PC-9 (cell line): ENCODE measurements at regions of chr14 and their contacts with region 1.

Region 1: GRCh38 chr14:75554487-75554886 is 23.9 kb upstream of the FLVCR2 start:
- DNase-seq: peak; percentile 81 to 100
- H3K4me3 ChIP-seq: peak overlapping the region; percentile 12; the same call in 1 of the 2 replicates
- H3K27ac ChIP-seq: peak overlapping the region; percentile 70
- H3K4me1 ChIP-seq: peaks cover 52% of the 10 kb centered on the region
- H3K27me3 ChIP-seq: no peaks in the 10 kb centered on the region
- CTCF ChIP-seq: no peak

Region 2: GRCh38 chr14:75487155-75487671 is 67.3 kb before region 1 on chr14:
- CTCF ChIA-PET with region 1: interaction called, 47 read pairs
- POLR2A ChIA-PET with region 1: interaction called, 10 read pairs
- intact Hi-C with region 1: no loop called
- DNase-seq: peak; percentile 83 to 99
- H3K4me3 ChIP-seq: no peak overlapping the region
- H3K27ac ChIP-seq: 0 out of 2 replicates have a peak overlapping the region, but pooled peaks have one; percentile 5
- H3K4me1 ChIP-seq: peaks cover 18% of the 10 kb centered on the region
- H3K27me3 ChIP-seq: no peaks in the 10 kb centered on the region
- CTCF ChIP-seq: no peak

Region 3: GRCh38 chr14:75497191-75497590 is 57.3 kb before region 1 on chr14:
- CTCF ChIA-PET with region 1: interaction called, 3 read pairs
- POLR2A ChIA-PET with region 1: interaction called, 5 read pairs
- intact Hi-C with region 1: loop called (anchors 1 kb)
- DNase-seq: no peak
- H3K4me3 ChIP-seq: no peak overlapping the region
- H3K27ac ChIP-seq: no peak overlapping the region
- H3K4me1 ChIP-seq: peaks cover 4% of the 10 kb centered on the region; the same call in 1 of the 2 replicates
- H3K27me3 ChIP-seq: no peaks in the 10 kb centered on the region
- CTCF ChIP-seq: no peak

Region 4: DNA sequence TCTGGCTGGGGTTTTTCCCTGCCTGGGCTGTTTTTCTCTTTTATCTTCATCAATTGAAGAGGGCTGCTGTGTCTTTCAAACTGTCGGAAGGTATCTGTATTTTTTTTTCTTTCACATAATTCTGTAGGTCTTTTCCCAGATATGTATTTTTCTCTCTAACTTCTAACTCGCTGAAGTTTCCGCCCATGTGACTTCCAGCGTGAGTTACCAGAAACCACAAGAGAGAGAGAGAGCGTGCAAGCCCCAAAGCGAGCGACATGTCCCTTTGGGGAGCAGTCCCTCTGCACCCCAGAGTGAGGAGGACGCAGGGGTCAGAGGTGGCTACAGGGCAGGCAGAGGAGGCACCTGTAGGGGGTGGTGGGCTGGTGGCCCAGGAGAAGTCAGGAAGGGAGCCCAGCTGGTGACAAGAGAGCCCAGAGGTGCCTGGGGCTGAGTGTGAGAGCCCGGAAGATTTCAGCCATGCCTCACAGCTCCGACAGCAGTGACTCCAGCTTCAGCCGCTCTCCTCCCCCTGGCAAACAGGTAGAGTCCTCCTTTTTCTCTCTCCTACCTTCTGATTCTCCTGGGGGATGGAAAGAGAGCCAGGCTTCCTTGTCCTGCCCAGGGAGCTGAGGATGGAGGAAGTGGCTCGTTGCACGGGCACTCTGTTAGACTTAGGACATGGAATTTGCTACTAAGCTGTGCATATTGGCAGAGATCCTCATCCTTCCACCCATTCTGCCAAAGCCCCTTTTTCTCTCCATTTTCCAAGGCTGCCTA is 32.1 kb before region 1 on chr14 and contains the start of gene BATF:
- CTCF ChIA-PET with region 1: interaction called, 39 read pairs
- POLR2A ChIA-PET with region 1: interaction called, 31 read pairs
- intact Hi-C with region 1: loop called (anchors 1 kb)
- DNase-seq: peak; percentile 69 to 74
- H3K4me3 ChIP-seq: peak within 1 kb of the TSS; percentile 68
- H3K27ac ChIP-seq: peak within 1 kb of the TSS; percentile 93
- H3K4me1 ChIP-seq: peaks cover 60% of the 10 kb centered on the region
- H3K27me3 ChIP-seq: no peaks in the 10 kb centered on the region
- CTCF ChIP-seq: no peak
- total RNA-seq, gene BATF: 55.7 and 79.0 TPM in 2 replicates

Region 5: DNA sequence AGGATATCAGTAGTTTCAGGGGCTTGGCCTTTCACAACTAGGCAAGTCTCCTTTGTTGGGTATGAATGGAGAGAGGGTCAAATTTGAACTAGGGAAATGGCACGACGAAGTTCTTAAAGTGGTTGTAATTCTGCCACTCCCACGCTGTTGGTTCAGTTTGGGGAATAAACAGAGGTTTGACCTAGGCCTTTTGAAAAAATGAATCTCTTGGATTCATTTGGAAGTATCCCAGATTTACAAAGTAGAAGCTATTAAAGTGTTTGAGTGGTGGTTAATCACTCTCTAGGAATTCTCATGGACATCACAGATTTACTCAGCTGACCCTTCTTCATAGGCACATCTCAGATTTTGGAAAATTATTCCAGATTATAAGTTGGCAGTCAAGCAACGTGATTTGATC is 17.4 kb before region 1 on chr14:
- CTCF ChIA-PET with region 1: interaction called, 4 read pairs
- POLR2A ChIA-PET with region 1: no interaction called
- intact Hi-C with region 1: loop called (anchors 1 kb)
- DNase-seq: no peak
- H3K4me3 ChIP-seq: no peak overlapping the region
- H3K27ac ChIP-seq: peak overlapping the region; percentile 95
- H3K4me1 ChIP-seq: peaks cover 45% of the 10 kb centered on the region
- H3K27me3 ChIP-seq: no peaks in the 10 kb centered on the region
- CTCF ChIP-seq: no peak

Region 6: DNA sequence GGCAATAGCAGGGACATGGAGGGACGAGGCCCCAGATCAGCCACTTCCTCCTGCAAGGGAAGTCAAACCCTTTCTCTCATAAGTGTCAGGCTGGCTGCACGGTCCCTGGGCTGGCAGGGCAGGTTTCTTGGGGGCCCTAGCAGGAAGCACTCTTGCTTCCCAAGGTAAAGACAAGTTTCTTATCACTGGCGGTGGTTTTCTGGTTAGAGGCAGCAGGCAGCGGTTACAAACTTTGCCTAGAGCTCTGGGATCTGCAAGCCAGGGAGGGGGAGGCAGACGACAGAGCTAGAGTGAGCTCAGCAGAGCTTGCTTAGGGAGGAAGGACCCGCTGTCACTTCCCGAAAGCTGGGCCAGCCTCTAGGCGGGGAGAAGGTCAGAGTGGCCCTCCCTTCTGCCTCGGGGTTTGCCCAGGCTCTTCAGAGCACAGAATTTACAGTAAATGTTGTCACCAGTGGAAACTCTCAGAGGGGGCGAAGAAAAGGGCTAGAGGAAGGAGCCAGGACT is 11.8 kb before region 1 on chr14:
- CTCF ChIA-PET with region 1: interaction called, 4 read pairs
- POLR2A ChIA-PET with region 1: interaction called, 11 read pairs
- intact Hi-C with region 1: loop called (anchors 1 kb)
- DNase-seq: peak; percentile 75 to 93
- H3K4me3 ChIP-seq: no peak overlapping the region
- H3K27ac ChIP-seq: peak overlapping the region; percentile 34; the same call in 1 of the 2 replicates
- H3K4me1 ChIP-seq: peaks cover 16% of the 10 kb centered on the region
- H3K27me3 ChIP-seq: no peaks in the 10 kb centered on the region
- CTCF ChIP-seq: no peak